ENCODE measurements at regions of chr1 and their contacts with region 1.

Region 1: GRCh38 chr1:162612606-162613400 is 19.5 kb upstream of the DDR2 start:
- DNase-seq: no peak
- ATAC-seq: peak; percentile 31
- H3K4me3 ChIP-seq: no peak overlapping the region
- H3K27ac ChIP-seq: no peak overlapping the region
- H3K4me1 ChIP-seq: no peaks in the 10 kb centered on the region; the same call in 1 of the 2 replicates
- H3K27me3 ChIP-seq: no peaks in the 10 kb centered on the region
- CTCF ChIP-seq: no peak

Region 2: DNA sequence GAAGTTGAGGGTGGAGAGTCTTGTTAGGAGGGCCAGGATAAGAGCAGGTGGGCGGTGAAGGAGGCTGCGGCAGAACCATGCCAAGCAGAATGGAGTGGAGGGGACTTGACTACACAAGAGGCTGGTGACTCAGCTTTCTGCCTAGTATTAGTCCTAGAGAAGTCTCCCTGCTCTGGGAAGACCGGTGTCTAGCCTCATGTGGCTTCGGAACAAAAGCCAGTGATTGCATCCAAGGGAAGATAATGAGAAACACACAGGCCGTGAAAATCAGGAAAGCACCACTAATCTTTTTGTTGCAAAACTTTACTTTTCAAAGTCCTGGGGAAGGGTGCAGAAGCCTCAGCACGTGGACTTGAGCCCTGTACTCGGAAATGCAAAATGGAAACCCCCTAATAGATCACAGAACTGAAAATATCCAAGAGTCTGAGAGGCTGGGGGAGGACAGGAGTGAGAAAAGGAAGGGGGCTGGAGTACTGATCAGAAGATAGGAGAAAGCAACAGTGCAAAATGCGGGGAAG is 50.8 kb after region 1 on chr1:
- CTCF ChIA-PET with region 1: no interaction called
- POLR2A ChIA-PET with region 1: interaction called, 3 read pairs
- intact Hi-C with region 1: loop called (anchors 5 kb)
- DNase-seq: peak; percentile 17
- ATAC-seq: no peak; the same call in 1 of the 2 replicates
- H3K4me3 ChIP-seq: no peak overlapping the region
- H3K27ac ChIP-seq: no peak overlapping the region
- H3K4me1 ChIP-seq: peaks cover 6% of the 10 kb centered on the region; the same call in 1 of the 2 replicates
- H3K27me3 ChIP-seq: no peaks in the 10 kb centered on the region
- CTCF ChIP-seq: no peak

Region 3: DNA sequence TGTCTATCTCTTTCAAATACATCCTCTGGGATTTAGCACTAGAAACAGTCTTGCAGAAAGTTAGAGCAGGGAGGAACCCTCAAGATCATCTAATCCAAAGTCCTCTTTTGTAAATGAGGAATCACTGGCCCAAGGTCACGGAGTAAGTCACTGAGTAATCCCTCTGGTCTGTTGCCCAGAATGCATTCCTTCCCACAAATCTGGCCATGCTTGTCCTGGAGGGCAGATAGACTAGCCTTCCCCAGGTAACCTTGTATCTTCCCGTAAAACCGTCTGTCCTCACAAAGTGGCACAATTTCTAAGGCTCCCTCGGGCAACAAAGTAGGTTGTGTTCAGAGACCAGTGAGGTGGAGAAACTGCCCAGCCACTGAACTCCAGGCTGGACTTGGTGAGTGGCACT is 65.6 kb after region 1 on chr1:
- CTCF ChIA-PET with region 1: no interaction called
- POLR2A ChIA-PET with region 1: no interaction called
- intact Hi-C with region 1: loop called (anchors 5 kb)
- DNase-seq: peak; percentile 93
- ATAC-seq: peak; percentile 93
- H3K4me3 ChIP-seq: no peak overlapping the region
- H3K27ac ChIP-seq: peak overlapping the region; percentile 33
- H3K4me1 ChIP-seq: peaks cover 31% of the 10 kb centered on the region
- H3K27me3 ChIP-seq: no peaks in the 10 kb centered on the region
- CTCF ChIP-seq: no peak